ENCODE measurements at regions of chr1 and their contacts with region 1.

Region 1: DNA sequence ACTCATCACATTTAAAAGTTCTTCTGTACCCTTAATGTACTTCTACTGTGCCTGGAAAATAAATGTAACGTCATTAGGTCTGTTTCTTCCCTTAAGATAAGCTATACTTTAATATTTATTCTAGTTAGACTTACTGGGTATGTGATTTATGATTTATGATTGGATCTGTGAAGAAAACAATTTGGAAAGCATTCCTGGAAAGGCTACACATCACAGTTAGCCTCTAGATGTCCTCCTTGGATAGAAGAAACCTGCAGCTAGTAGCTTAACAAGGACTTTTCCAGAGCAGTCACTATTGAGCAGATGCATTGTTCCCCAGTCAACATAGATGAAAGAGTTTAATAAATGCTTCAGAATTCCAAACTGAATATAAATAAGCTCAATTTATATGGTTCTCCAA is 22.2 kb upstream of the ABL2 start:
- DNase-seq: peak in 2 of 4 experiments; percentile 28 to 44
- ATAC-seq: peak; percentile 84
- H3K4me3 ChIP-seq: no peak overlapping the region
- H3K27ac ChIP-seq: no peak overlapping the region
- H3K4me1 ChIP-seq: no peaks in the 10 kb centered on the region; a peak in 1 of 5 replicates
- H3K27me3 ChIP-seq: no peaks in the 10 kb centered on the region; a peak in 1 of 5 replicates
- CTCF ChIP-seq: peak; percentile 55 to 85 (median 56); a peak in 4 of 6 replicates
- EP300 ChIP-seq: no peak
- POLR2A ChIP-seq: no peak
- RAD21 ChIP-seq: peak; percentile 80 to 94

Region 2: DNA sequence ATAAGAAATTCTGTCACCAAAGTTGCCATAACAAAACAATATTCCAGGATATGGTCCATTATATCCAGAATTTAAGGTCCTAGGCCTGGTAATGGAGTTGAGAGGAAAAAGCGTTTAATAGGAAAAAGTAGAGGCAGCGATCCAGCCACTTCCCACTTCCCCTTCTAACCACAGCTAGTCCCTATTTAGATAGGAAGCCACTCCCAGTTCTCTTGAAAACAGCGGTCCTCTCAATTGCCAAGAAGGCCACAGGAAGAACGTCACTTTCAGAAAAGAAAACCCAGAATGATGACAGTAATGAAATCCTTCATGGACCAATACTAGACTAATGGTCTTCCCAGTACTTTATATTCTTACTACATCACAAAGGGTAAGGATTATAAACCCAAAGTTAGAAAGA is 60.8 kb before region 1 on chr1:
- CTCF ChIA-PET with region 1: no interaction called
- POLR2A ChIA-PET with region 1: no interaction called
- in situ Hi-C with region 1: no loop called
- intact Hi-C with region 1: no loop called
- DNase-seq: peak in 1 of 4 experiments; percentile 13
- ATAC-seq: no peak
- H3K4me3 ChIP-seq: no peak overlapping the region
- H3K27ac ChIP-seq: no peak overlapping the region
- H3K4me1 ChIP-seq: peaks cover 7 to 10% of the 10 kb centered on the region in 2 experiments; a peak in 2 of 5 replicates
- H3K27me3 ChIP-seq: no peaks in the 10 kb centered on the region
- CTCF ChIP-seq: no peak
- EP300 ChIP-seq: no peak
- POLR2A ChIP-seq: no peak
- RAD21 ChIP-seq: no peak

Region 3: GRCh38 chr1:179269071-179269470 is 17.4 kb after region 1 on chr1:
- CTCF ChIA-PET with region 1: no interaction called
- POLR2A ChIA-PET with region 1: no interaction called
- in situ Hi-C with region 1: no loop called
- intact Hi-C with region 1: no loop called
- DNase-seq: no peak
- ATAC-seq: peak; percentile 21; the same call in 1 of the 3 replicates
- H3K4me3 ChIP-seq: no peak overlapping the region
- H3K27ac ChIP-seq: no peak overlapping the region
- H3K4me1 ChIP-seq: no peaks in the 10 kb centered on the region
- H3K27me3 ChIP-seq: 0 out of 5 replicates have a peak, but pooled peaks cover 0 to 3% of the 10 kb centered on the region in 2 experiments
- CTCF ChIP-seq: no peak
- EP300 ChIP-seq: no peak
- POLR2A ChIP-seq: no peak
- RAD21 ChIP-seq: no peak

Region 4: DNA sequence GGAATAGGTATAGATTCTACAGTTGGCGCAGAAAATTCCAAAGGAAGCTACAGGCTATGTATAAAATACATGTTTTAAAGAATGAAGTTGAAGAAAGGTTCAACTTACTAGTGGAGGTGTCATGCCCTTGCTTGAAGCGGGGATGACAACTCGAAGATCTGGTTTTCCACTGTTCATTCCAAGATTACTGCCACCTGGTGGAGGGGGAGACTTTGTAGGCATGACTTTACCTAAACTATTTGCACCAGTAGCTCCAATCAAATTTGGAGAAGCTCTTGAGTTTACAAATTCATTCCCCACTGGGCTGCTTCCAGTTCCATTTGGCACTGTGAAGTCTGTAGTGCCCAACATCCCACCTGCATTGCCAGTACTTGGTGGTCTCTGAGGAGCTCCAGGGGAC is 195.8 kb after region 1 on chr1:
- CTCF ChIA-PET with region 1: no interaction called
- POLR2A ChIA-PET with region 1: no interaction called
- in situ Hi-C with region 1: no loop called
- intact Hi-C with region 1: loop called (anchors 5 kb)
- DNase-seq: peak; percentile 18 to 59 (median 23)
- ATAC-seq: peak; percentile 71
- H3K4me3 ChIP-seq: no peak overlapping the region
- H3K27ac ChIP-seq: peak overlapping the region; percentile 58; the same call in 1 of the 3 replicates
- H3K4me1 ChIP-seq: peaks cover 10 to 11% of the 10 kb centered on the region in 2 experiments; a peak in 3 of 5 replicates
- H3K27me3 ChIP-seq: peaks cover 3 to 5% of the 10 kb centered on the region in 2 experiments; a peak in 3 of 5 replicates
- CTCF ChIP-seq: peak; percentile 33 to 57 (median 45); a peak in 4 of 6 replicates
- EP300 ChIP-seq: no peak
- POLR2A ChIP-seq: no peak
- RAD21 ChIP-seq: peak in 1 of 2 experiments; percentile 39; a peak in 1 of 4 replicates

Region 5: GRCh38 chr1:179599623-179600249 is 348.1 kb after region 1 on chr1:
- CTCF ChIA-PET with region 1: interaction called, 4 read pairs
- POLR2A ChIA-PET with region 1: no interaction called
- in situ Hi-C with region 1: no loop called
- intact Hi-C with region 1: loop called (anchors 2 kb)
- DNase-seq: peak; percentile 26 to 52 (median 28)
- ATAC-seq: peak; percentile 87
- H3K4me3 ChIP-seq: no peak overlapping the region
- H3K27ac ChIP-seq: no peak overlapping the region
- H3K4me1 ChIP-seq: no peaks in the 10 kb centered on the region
- H3K27me3 ChIP-seq: no peaks in the 10 kb centered on the region
- CTCF ChIP-seq: peak; percentile 44 to 61 (median 53)
- EP300 ChIP-seq: no peak
- POLR2A ChIP-seq: no peak
- RAD21 ChIP-seq: peak; percentile 23 to 71; a peak in 2 of 4 replicates